ENCODE measurements at regions of chr14 and their contacts with region 1.

Region 1: DNA sequence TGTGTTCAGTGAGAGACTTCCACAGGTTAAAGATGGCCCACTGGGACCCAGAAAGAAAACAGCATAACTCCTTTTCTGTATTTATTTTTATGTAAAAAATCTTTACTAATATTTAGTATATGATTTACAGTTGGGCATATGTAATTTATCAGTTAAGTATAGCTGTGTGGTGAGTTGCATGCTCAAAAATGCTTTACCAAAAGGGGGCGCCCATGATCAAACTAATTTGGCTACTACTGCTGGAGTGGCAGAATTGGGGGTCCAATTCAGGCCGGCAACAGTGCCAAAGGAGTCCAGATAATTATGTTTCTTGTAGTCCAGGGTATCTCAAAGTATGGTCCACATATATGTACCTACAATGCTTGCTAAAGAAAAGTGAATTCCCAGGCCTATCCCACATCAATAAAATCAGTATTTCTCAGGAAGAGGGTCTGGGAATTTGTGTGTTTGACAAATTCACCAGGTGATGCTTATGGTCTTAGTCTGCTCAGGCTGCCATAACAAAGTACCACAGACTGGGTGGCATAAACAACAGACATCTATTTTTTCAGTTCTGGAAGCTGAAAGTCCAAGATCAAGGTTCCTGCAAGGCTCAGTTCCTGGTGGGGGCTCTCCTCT is 152.0 kb downstream of the KTN1 start:
- DNase-seq: peak; percentile 60
- ATAC-seq: no peak
- H3K4me3 Mint-ChIP-seq: no peak overlapping the region
- H3K27ac Mint-ChIP-seq: no peak overlapping the region
- H3K4me1 Mint-ChIP-seq: peaks cover 3% of the 10 kb centered on the region
- H3K27me3 Mint-ChIP-seq: no peaks in the 10 kb centered on the region

Region 2: GRCh38 chr14:56474419-56475022 is 742.5 kb after region 1 on chr14:
- CTCF ChIA-PET with region 1: interaction called, 25 read pairs
- DNase-seq: no peak
- ATAC-seq: no peak
- H3K4me3 Mint-ChIP-seq: no peak overlapping the region
- H3K27ac Mint-ChIP-seq: no peak overlapping the region
- H3K4me1 Mint-ChIP-seq: no peaks in the 10 kb centered on the region
- H3K27me3 Mint-ChIP-seq: peaks cover 13% of the 10 kb centered on the region